GM12878 (cell line): ENCODE measurements at regions of chr11 and their contacts with region 1.

Region 1: DNA sequence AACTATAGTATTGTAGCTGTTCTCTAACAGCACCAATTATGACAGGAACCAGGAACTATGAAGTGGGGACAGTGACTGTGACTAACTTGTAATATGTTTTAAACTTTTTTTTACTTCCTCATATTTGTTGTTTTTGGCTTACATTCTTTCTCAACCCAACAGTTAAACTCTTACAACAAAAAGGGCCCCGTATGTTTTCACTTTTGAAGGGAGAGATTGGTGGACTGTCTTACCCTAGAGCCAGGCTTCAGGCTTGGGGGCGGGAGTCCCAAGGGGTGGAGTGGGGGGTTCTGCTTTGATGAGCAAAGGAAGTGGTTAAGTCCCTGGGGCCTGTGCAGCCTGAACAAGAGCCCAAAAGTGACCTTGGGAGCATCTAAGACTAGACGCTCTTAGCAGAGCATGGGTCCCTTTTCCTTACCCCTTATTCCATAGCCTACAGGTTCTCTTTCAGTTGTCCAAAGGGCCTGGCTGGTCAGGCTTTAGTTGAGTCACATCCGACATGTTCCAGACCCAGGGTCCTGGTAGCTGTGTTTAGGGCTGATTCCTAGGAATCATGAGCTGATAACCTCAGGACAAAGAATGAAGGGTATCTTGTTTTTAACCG is 38.8 kb downstream of the STIM1 start:
- DNase-seq: peak; percentile 91
- ATAC-seq: peak; percentile 98
- H3K4me3 ChIP-seq: peak overlapping the region; percentile 70
- H3K27ac ChIP-seq: peak overlapping the region; percentile 98
- H3K4me1 ChIP-seq: peaks cover 23% of the 10 kb centered on the region
- H3K27me3 ChIP-seq: no peaks in the 10 kb centered on the region
- CTCF ChIP-seq: no peak
- EP300 ChIP-seq: peak; percentile 81 to 85
- POLR2A ChIP-seq: peak; percentile 56
- RAD21 ChIP-seq: peak; percentile 36; the same call in 1 of the 2 replicates

Region 2: DNA sequence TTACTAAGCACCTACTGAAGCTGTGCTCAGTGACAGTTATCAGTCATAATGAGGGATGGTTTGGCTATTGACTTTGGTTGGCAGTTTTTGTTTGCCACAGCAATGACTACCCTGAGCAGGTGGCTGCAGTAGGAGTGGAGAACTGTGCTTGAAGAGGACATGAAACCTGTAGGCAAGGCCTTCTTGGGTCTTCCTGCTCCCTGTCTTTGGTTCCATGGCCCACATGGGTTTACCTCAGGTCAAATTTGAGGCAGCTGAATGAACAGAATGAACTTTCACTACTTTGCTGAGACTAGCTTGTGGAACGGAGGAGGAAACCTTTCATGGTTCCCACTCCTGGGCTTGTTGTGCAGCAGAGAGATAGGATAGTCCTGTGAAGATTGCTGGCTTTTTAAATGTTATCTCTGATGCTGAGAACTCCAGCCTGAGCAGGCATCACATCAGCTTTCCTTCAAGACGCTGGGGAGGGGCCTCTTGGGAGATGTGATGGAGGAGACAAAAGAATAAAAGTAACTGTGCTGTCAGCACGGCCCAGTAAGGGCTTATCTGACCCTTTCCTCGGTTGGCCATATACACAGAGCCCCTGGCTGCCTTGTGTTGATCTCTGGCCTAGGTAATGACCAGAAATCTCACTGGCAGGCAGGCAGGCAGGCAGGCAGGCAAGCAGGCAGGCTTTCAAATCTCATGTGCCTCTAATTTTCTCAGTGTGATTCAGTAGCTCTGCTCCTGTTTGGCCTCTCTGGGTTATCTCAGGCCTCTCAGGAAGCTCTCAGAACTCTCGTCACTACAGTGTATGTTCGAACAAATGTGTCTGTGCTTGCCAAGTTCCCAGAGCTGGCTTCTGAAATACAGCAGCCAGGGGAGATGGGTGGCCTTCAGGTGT is 26.8 kb before region 1 on chr11:
- CTCF ChIA-PET with region 1: interaction called, 8 read pairs
- POLR2A ChIA-PET with region 1: interaction called, 23 read pairs
- RAD21 ChIA-PET with region 1: interaction called, 13 read pairs
- SMC1A ChIA-PET with region 1: interaction called, 28 read pairs
- in situ Hi-C with region 1: no loop called
- intact Hi-C with region 1: no loop called
- DNase-seq: peak; percentile 66
- ATAC-seq: peak; percentile 57
- H3K4me3 ChIP-seq: peak overlapping the region; percentile 28; the same call in 1 of the 2 replicates
- H3K27ac ChIP-seq: peak overlapping the region; percentile 82
- H3K4me1 ChIP-seq: peaks cover 65% of the 10 kb centered on the region
- H3K27me3 ChIP-seq: no peaks in the 10 kb centered on the region
- CTCF ChIP-seq: no peak
- EP300 ChIP-seq: no peak
- POLR2A ChIP-seq: no peak
- RAD21 ChIP-seq: no peak

Region 3: DNA sequence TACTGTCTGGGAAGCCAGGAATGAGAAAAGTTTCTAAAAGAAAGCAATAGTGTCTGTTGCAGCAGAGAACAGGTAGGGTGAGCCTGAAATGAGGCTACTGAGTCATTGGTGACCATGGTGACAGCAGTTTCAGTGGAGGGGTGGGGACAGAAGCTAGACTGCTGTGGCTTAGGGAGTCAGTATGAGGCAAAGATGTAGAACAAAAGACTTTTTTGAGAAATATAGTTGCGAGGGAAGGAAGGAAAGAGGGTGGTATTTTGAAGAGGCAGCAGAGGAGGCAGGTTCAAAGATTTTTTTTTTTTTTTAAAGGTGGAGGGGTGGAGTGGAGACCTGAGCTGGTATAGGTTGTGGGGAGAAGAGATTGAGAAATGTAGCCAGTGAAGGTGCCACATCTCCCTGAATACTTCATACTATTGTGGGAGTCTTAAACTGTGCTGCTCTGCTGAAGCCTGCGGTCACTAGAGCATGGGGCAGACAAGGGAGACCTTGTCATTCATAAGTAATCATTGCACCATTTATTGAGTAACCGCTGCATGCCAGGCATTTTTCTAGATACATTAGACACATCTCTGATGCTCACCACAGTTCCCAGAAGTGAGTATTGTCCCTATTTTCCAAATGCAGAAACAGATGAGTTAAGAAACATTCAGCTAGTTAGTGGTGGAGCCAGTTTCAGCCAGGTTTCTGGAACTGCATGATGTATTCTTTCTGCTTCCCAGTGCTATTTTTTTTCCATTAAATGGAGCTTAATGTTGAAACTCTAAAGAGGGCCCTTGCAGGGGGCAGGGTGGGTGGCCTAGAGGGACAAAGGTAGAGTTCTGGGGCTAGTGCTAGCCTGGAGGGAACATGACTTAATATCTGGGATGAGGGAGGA is 11.1 kb after region 1 on chr11:
- CTCF ChIA-PET with region 1: interaction called, 8 read pairs
- POLR2A ChIA-PET with region 1: interaction called, 8 read pairs
- RAD21 ChIA-PET with region 1: interaction called, 12 read pairs
- SMC1A ChIA-PET with region 1: interaction called, 71 read pairs
- in situ Hi-C with region 1: no loop called
- intact Hi-C with region 1: no loop called
- DNase-seq: no peak
- ATAC-seq: peak; percentile 89
- H3K4me3 ChIP-seq: no peak overlapping the region
- H3K27ac ChIP-seq: no peak overlapping the region
- H3K4me1 ChIP-seq: peaks cover 51% of the 10 kb centered on the region
- H3K27me3 ChIP-seq: no peaks in the 10 kb centered on the region
- CTCF ChIP-seq: no peak
- EP300 ChIP-seq: no peak
- POLR2A ChIP-seq: no peak
- RAD21 ChIP-seq: no peak

Region 4: DNA sequence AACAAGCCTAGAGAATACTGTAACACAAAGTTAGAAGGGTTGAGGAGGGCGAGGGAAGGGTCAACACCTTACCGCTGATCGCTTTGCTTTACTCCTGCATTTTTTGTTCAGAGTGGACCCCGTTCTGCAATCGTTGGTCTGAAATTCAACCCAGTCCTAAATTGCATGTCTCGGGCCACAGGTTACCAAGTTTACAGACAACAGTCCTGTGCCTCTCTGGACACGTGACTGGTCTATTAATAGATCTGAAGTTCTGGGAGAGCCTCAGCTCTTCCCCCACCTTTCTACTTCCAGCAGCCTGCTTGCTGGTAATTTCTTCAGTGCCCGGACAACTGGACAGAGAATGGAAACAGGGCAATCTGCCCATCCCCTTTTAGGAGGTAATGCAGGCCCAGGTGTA is 35.4 kb after region 1 on chr11:
- CTCF ChIA-PET with region 1: interaction called, 10 read pairs
- POLR2A ChIA-PET with region 1: interaction called, 4 read pairs
- RAD21 ChIA-PET with region 1: interaction called, 11 read pairs
- SMC1A ChIA-PET with region 1: interaction called, 19 read pairs
- in situ Hi-C with region 1: no loop called
- intact Hi-C with region 1: no loop called
- DNase-seq: no peak
- ATAC-seq: no peak
- H3K4me3 ChIP-seq: no peak overlapping the region
- H3K27ac ChIP-seq: no peak overlapping the region
- H3K4me1 ChIP-seq: peaks cover 14% of the 10 kb centered on the region
- H3K27me3 ChIP-seq: no peaks in the 10 kb centered on the region
- CTCF ChIP-seq: no peak
- EP300 ChIP-seq: no peak
- POLR2A ChIP-seq: no peak
- RAD21 ChIP-seq: no peak

Region 5: DNA sequence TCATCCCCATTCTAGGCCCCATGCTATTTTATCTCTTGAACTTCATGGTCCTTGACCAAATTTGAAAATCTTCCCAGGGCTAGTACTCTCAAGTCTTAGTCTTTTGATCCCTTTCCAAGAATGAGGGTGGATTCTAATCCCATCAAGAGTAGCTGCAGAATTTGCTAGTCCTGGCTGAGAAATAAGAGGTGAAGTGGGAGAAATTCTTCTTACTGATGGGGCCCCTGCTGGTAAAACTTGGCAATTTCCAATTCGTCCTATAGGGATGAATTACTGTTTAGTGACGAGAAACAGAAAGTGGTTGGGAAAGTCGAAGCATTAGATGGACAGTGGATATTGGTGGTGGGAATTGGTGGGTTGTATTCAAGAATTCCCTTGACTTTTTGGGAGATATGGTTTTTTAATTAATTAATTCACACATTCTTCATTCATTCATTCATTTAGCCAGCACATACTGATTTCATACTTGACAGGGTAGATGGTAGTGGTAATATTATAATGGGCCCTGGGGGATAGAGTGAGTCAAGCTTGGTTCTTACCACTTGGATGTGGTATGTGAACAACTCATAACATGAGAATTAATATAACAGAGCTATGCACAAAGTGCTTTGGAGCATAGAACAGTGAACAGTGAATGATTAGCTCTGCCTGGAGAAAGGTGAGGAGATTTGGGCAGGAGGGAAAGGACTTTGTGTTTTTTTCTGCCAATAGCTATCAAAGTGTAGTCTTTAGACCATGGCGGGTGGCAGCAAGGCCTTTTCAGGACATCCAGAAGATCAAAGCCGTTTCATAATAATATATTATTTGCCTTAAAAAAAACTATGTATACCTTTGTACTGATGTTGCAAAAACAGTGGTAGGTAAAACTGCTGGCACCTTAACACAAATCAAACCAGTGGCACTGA is 65.0 kb after region 1 on chr11:
- CTCF ChIA-PET with region 1: interaction called, 4 read pairs
- POLR2A ChIA-PET with region 1: interaction called, 3 read pairs
- RAD21 ChIA-PET with region 1: interaction called, 3 read pairs
- SMC1A ChIA-PET with region 1: interaction called, 14 read pairs
- in situ Hi-C with region 1: no loop called
- intact Hi-C with region 1: no loop called
- DNase-seq: no peak
- ATAC-seq: peak; percentile 89
- H3K4me3 ChIP-seq: no peak overlapping the region
- H3K27ac ChIP-seq: no peak overlapping the region
- H3K4me1 ChIP-seq: peaks cover 4% of the 10 kb centered on the region; the same call in 1 of the 2 replicates
- H3K27me3 ChIP-seq: no peaks in the 10 kb centered on the region
- CTCF ChIP-seq: peak; percentile 25 to 32 (median 30); a peak in 3 of 6 replicates
- EP300 ChIP-seq: no peak
- POLR2A ChIP-seq: no peak
- RAD21 ChIP-seq: peak; percentile 41; the same call in 1 of the 2 replicates

Region 6: DNA sequence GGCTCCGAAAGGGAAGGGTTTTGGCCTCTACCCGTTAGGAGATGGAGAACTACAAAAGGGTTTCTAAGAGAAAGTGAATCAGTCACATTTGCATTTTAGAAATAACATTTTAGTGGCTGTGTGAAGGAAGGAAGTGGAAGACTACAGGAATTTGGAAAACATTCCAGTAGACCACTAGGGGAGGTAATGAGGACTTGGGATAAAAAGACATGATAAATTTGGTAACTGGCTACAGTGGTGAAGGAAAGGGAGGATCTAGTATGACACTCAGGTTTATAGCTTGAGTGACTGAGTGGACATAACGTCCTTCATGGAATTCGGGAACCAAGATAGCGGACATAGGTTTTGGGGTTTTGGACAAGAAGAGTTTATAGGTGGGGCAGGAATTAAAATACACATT is 193.3 kb after region 1 on chr11:
- CTCF ChIA-PET with region 1: no interaction called
- POLR2A ChIA-PET with region 1: no interaction called
- RAD21 ChIA-PET with region 1: no interaction called
- SMC1A ChIA-PET with region 1: no interaction called
- in situ Hi-C with region 1: no loop called
- intact Hi-C with region 1: no loop called
- DNase-seq: no peak
- ATAC-seq: no peak
- H3K4me3 ChIP-seq: no peak overlapping the region
- H3K27ac ChIP-seq: no peak overlapping the region
- H3K4me1 ChIP-seq: peaks cover 8% of the 10 kb centered on the region
- H3K27me3 ChIP-seq: no peaks in the 10 kb centered on the region
- CTCF ChIP-seq: no peak
- EP300 ChIP-seq: no peak
- POLR2A ChIP-seq: no peak
- RAD21 ChIP-seq: no peak

Region 7: GRCh38 chr11:4156571-4156970 is 262.3 kb after region 1 on chr11:
- CTCF ChIA-PET with region 1: no interaction called
- POLR2A ChIA-PET with region 1: no interaction called
- RAD21 ChIA-PET with region 1: no interaction called
- SMC1A ChIA-PET with region 1: no interaction called
- in situ Hi-C with region 1: no loop called
- intact Hi-C with region 1: no loop called
- DNase-seq: no peak
- ATAC-seq: no peak
- H3K4me3 ChIP-seq: no peak overlapping the region
- H3K27ac ChIP-seq: no peak overlapping the region
- H3K4me1 ChIP-seq: no peaks in the 10 kb centered on the region
- H3K27me3 ChIP-seq: no peaks in the 10 kb centered on the region
- CTCF ChIP-seq: no peak
- EP300 ChIP-seq: no peak
- POLR2A ChIP-seq: no peak
- RAD21 ChIP-seq: no peak